HepG2 (cell line): ENCODE measurements at regions of chr4 and their contacts with region 1.

Region 1: GRCh38 chr4:102439236-102439614 is 61.9 kb upstream of the NFKB1 start:
- DNase-seq: peak; percentile 33
- ATAC-seq: no peak
- H3K4me3 ChIP-seq: no peak overlapping the region
- H3K27ac ChIP-seq: no peak overlapping the region
- H3K4me1 ChIP-seq: peaks cover 64% of the 10 kb centered on the region
- H3K27me3 ChIP-seq: no peaks in the 10 kb centered on the region
- CTCF ChIP-seq: no peak
- EP300 ChIP-seq: peak; percentile 32 to 51; a peak in 1 of 4 replicates
- POLR2A ChIP-seq: no peak
- RAD21 ChIP-seq: no peak

Region 2: GRCh38 chr4:102477657-102478056 is 38.4 kb after region 1 on chr4:
- CTCF ChIA-PET with region 1: no interaction called
- POLR2A ChIA-PET with region 1: interaction called, 14 read pairs
- in situ Hi-C with region 1: no loop called
- intact Hi-C with region 1: no loop called
- DNase-seq: no peak
- ATAC-seq: no peak
- H3K4me3 ChIP-seq: peak overlapping the region in 1 of 3 experiments; percentile 59; a peak in 2 of 6 replicates
- H3K27ac ChIP-seq: no peak overlapping the region
- H3K4me1 ChIP-seq: peaks cover 29% of the 10 kb centered on the region
- H3K27me3 ChIP-seq: no peaks in the 10 kb centered on the region
- CTCF ChIP-seq: no peak
- EP300 ChIP-seq: no peak
- POLR2A ChIP-seq: no peak
- RAD21 ChIP-seq: no peak

Region 3: GRCh38 chr4:103019308-103020124 is 580.3 kb after region 1 on chr4 and contains the start of gene SLC9B1:
- CTCF ChIA-PET with region 1: no interaction called
- POLR2A ChIA-PET with region 1: no interaction called
- in situ Hi-C with region 1: loop called (anchors 10 kb)
- intact Hi-C with region 1: no loop called
- DNase-seq: peak; percentile 77
- ATAC-seq: peak; percentile 96
- H3K4me3 ChIP-seq: peak within 1 kb of the TSS; percentile 68 to 81 (median 76)
- H3K27ac ChIP-seq: peak within 1 kb of the TSS; percentile 79
- H3K4me1 ChIP-seq: peaks cover 11% of the 10 kb centered on the region
- H3K27me3 ChIP-seq: no peaks in the 10 kb centered on the region; a peak in 1 of 5 replicates
- CTCF ChIP-seq: peak; percentile 24; the same call in 1 of the 2 replicates
- EP300 ChIP-seq: peak in 1 of 2 experiments; percentile 55; a peak in 2 of 4 replicates
- POLR2A ChIP-seq: peak; percentile 75 to 76
- RAD21 ChIP-seq: peak; percentile 13; the same call in 1 of the 2 replicates
- total RNA-seq, gene SLC9B1: 0.20 TPM in 1 of 2 replicates, not detected in the other

Region 4: DNA sequence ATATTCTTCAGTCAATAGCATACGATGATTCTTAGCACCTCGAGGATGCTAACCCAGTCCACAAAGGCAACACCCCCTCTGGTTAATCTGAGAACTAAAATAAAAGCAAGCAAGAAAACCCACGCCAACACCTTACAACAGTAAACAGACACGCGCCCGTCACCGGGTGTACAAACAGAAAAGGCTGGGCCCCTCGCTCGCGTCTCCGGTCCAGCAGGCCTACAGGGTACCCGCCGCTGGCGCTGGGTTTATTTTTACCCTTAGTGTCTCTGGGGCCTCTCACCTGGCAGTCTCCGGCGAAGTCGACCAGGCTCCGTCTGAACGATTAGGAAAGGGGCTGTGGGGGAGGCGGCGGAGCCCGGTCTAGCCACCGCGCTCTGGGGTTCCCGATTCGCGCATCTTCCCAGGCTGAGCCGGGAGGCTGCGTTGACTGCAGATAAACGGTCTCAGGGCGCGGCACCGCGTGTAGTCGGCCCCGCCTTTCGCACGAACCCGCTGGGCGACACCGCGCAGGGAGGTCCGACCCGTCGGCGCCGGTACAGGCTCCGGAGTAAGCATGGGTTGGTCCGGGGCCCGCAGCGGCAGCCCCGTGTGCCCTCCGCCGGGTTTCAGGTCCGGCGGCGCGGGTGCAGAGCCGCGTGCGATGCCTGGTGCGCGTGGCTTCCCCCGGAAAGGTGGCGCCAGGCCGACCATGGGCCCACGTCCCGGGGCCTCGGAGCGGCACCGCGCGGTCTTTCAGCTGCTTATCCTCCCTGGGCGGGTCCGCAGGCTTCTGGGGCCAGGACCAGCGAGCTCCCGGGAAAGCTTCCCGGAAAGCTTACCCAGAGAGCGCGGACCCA is 636.9 kb after region 1 on chr4:
- CTCF ChIA-PET with region 1: no interaction called
- POLR2A ChIA-PET with region 1: no interaction called
- in situ Hi-C with region 1: no loop called
- intact Hi-C with region 1: loop called (anchors 5 kb)
- DNase-seq: peak; percentile 53
- ATAC-seq: peak; percentile 77
- H3K4me3 ChIP-seq: peak overlapping the region; percentile 81 to 90 (median 87)
- H3K27ac ChIP-seq: peak overlapping the region; percentile 90
- H3K4me1 ChIP-seq: peaks cover 42% of the 10 kb centered on the region
- H3K27me3 ChIP-seq: no peaks in the 10 kb centered on the region; a peak in 1 of 5 replicates
- CTCF ChIP-seq: no peak
- EP300 ChIP-seq: no peak
- POLR2A ChIP-seq: peak; percentile 62 to 72
- RAD21 ChIP-seq: peak; percentile 47